IMR-90 (cell line): ENCODE measurements at regions of chr10 and their contacts with region 1.

Region 1: DNA sequence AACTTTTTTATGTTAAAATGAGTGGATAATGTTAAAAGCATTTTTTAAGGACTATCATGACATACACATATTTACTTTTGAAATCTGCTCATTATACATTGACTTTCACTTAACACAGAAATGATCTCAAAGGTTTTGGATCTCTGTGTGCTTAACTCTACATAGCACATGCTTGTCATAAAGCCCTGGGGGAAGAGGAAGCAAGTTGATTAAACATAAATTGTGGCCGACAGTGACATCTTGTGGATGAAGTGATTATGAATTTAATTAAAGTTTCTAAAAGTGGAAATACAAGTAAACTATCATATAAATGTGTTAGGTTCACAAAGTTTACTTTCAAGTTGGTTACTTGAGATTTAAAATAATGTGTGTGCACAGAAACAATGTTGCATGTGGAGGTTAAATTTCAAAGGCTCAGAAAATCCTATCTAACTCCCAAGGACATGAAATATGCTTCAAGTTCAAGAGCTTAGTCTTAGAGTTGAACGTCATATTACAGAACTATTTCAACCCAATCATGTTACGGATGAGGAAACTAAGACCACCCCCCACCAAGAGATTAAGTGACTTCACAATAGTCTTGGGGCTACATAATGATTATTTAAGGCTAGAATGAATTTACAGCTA is 1247.7 kb downstream of the GATA3 start:
- DNase-seq: peak; percentile 53
- ATAC-seq: peak; percentile 62
- H3K4me3 ChIP-seq: no peak overlapping the region
- H3K27ac ChIP-seq: no peak overlapping the region
- H3K4me1 ChIP-seq: no peaks in the 10 kb centered on the region
- H3K27me3 ChIP-seq: no peaks in the 10 kb centered on the region
- CTCF ChIP-seq: peak; percentile 50
- POLR2A ChIP-seq: no peak
- RAD21 ChIP-seq: peak; percentile 54

Region 2: GRCh38 chr10:7525314-7526016 is 1776.8 kb before region 1 on chr10:
- CTCF ChIA-PET with region 1: no interaction called
- POLR2A ChIA-PET with region 1: interaction called, 6 read pairs
- dilution Hi-C with region 1: no loop called
- in situ Hi-C with region 1: loop called (anchors 5 kb)
- intact Hi-C with region 1: loop called (anchors 1 kb)
- DNase-seq: peak; percentile 66
- ATAC-seq: peak; percentile 85
- H3K4me3 ChIP-seq: no peak overlapping the region
- H3K27ac ChIP-seq: no peak overlapping the region
- H3K4me1 ChIP-seq: no peaks in the 10 kb centered on the region
- H3K27me3 ChIP-seq: peaks cover 1% of the 10 kb centered on the region; the same call in 1 of the 2 replicates
- CTCF ChIP-seq: peak; percentile 88
- POLR2A ChIP-seq: no peak
- RAD21 ChIP-seq: peak; percentile 85

Region 3: DNA sequence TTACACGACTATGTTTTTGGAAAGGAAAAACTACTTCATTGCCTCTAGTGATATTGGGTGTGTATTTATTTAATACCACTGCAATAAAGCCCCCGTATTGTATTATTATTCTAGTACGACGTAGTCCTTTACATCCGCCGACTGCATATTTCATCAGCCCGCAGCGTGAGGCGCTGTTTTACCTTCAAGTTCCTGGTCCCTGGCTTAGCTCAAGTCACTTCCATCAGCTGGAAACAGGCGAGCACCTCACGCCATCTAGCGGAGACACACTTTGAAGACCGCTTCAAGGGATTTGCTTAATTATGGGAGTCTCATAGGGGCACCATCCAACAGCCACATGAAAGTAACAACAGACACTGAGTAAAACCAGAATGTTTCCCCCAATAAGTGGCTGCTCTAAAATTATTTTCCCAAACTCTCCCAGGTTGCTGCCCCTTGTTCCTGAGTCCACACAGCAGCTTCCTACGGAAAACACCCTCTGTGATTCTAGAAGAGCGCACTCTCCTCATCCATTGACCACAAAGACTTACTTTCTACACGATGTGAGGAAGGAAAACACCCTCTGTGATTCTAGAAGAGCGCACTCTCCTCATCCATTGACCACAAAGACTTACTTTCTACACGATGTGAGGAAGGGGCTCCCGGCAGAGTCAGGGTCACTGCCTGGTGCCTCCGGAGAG is 1614.9 kb before region 1 on chr10:
- CTCF ChIA-PET with region 1: no interaction called
- POLR2A ChIA-PET with region 1: no interaction called
- dilution Hi-C with region 1: no loop called
- in situ Hi-C with region 1: no loop called
- intact Hi-C with region 1: loop called (anchors 5 kb)
- DNase-seq: peak; percentile 85
- ATAC-seq: peak; percentile 96
- H3K4me3 ChIP-seq: no peak overlapping the region
- H3K27ac ChIP-seq: no peak overlapping the region
- H3K4me1 ChIP-seq: no peaks in the 10 kb centered on the region
- H3K27me3 ChIP-seq: no peaks in the 10 kb centered on the region; the same call in 1 of the 2 replicates
- CTCF ChIP-seq: peak; percentile 85
- POLR2A ChIP-seq: no peak
- RAD21 ChIP-seq: peak; percentile 70

Region 4: DNA sequence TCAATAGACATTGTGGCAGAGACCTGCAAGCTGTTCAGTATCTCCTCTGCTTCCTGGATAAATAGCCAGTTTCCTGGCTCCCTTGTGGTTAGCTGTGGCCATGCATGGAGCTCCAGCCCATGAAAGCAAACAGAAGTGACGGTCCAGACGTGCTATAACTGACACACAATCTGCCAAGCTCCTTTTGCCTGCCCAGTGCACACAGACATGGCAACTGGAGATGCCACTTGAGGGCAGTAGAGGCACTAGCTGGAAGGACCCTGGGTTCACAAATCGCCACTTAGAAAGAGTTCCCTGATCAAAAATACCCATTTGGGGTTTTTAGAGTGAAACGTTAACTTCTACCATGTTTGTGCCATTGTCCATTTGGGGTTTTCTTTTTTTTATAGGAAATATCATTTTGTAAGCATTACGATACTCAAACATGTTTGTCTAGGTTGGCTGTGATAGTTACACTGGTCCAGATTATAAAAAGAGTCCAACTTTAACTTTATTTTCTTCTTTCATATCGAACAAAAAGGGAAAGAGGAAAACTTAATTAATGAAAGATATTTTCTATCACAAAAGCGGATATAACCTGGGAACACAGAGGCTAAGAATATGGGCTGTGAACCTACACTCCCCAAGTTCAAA is 1545.8 kb before region 1 on chr10:
- CTCF ChIA-PET with region 1: no interaction called
- POLR2A ChIA-PET with region 1: no interaction called
- dilution Hi-C with region 1: no loop called
- in situ Hi-C with region 1: no loop called
- intact Hi-C with region 1: loop called (anchors 10 kb)
- DNase-seq: peak; percentile 8
- ATAC-seq: peak; percentile 56; the same call in 1 of the 2 replicates
- H3K4me3 ChIP-seq: no peak overlapping the region
- H3K27ac ChIP-seq: no peak overlapping the region
- H3K4me1 ChIP-seq: no peaks in the 10 kb centered on the region
- H3K27me3 ChIP-seq: no peaks in the 10 kb centered on the region
- CTCF ChIP-seq: peak; percentile 36; the same call in 1 of the 2 replicates
- POLR2A ChIP-seq: no peak
- RAD21 ChIP-seq: peak; percentile 37; the same call in 1 of the 2 replicates

Region 5: GRCh38 chr10:7866176-7866575 is 1436.1 kb before region 1 on chr10:
- CTCF ChIA-PET with region 1: no interaction called
- POLR2A ChIA-PET with region 1: no interaction called
- dilution Hi-C with region 1: no loop called
- in situ Hi-C with region 1: loop called (anchors 5 kb)
- intact Hi-C with region 1: no loop called
- DNase-seq: peak; percentile 35
- ATAC-seq: no peak
- H3K4me3 ChIP-seq: no peak overlapping the region
- H3K27ac ChIP-seq: no peak overlapping the region
- H3K4me1 ChIP-seq: no peaks in the 10 kb centered on the region
- H3K27me3 ChIP-seq: no peaks in the 10 kb centered on the region
- CTCF ChIP-seq: no peak
- POLR2A ChIP-seq: no peak
- RAD21 ChIP-seq: no peak

Region 6: DNA sequence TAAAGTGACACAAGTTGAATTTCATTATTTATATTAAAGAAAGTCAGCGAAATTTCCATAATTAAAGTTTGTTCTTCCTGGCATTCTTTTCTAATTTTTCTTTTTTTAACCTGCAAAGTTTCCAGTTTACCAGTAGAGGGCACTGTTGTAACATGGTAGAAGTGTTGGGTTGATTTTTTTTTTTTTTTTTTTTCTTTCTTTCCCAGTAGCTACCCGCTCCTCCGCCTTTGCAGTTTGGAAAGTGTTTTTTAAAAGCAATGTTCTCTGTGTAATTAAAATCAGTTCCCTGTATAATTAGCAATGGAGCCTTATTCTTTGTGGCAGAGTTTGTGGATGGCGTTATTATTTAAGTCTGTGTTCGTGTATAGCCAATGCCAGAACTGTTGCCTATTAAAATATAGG is 1430.2 kb before region 1 on chr10:
- CTCF ChIA-PET with region 1: no interaction called
- POLR2A ChIA-PET with region 1: no interaction called
- dilution Hi-C with region 1: no loop called
- in situ Hi-C with region 1: loop called (anchors 5 kb)
- intact Hi-C with region 1: loop called (anchors 2 kb)
- DNase-seq: peak; percentile 11
- ATAC-seq: no peak
- H3K4me3 ChIP-seq: 0 out of 2 replicates have a peak overlapping the region, but pooled peaks have one; percentile 34
- H3K27ac ChIP-seq: no peak overlapping the region
- H3K4me1 ChIP-seq: no peaks in the 10 kb centered on the region
- H3K27me3 ChIP-seq: no peaks in the 10 kb centered on the region
- CTCF ChIP-seq: peak; percentile 86
- POLR2A ChIP-seq: no peak
- RAD21 ChIP-seq: peak; percentile 85

Region 7: DNA sequence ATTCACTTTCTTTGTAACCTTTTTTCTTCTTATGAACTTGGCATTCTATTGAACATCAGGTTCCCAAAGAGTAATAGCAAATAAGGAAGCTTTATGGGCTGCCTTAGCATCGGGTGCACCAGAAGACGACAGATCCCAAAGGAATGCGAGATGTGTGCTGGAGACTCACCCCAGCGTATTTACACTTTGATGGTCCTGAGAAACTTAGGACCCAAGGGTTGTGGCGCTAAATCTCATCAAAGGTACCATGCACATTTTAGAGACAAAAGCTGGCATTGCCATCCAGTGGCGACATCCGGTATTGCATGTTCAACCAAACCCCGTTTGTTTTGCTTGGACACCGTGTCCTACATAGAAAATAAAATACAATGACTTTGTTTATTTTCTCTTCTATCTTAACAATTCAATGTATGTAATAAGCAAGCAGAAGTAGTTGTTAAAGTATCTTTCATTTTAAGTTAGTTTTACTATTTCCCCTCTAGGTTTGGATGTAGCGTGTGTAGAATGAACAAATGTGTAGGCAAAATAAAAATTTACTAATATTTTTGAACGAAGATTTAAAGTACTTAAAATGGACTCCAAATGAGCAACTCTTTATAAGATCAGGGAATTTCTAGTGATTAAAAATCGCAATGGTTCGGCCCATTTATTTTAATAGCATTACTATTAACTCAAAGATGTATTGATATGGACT is 93.0 kb before region 1 on chr10:
- CTCF ChIA-PET with region 1: no interaction called
- POLR2A ChIA-PET with region 1: no interaction called
- dilution Hi-C with region 1: no loop called
- in situ Hi-C with region 1: no loop called
- intact Hi-C with region 1: loop called (anchors 5 kb)
- DNase-seq: peak; percentile 60
- ATAC-seq: peak; percentile 84
- H3K4me3 ChIP-seq: no peak overlapping the region
- H3K27ac ChIP-seq: no peak overlapping the region
- H3K4me1 ChIP-seq: no peaks in the 10 kb centered on the region
- H3K27me3 ChIP-seq: no peaks in the 10 kb centered on the region
- CTCF ChIP-seq: peak; percentile 84
- POLR2A ChIP-seq: no peak
- RAD21 ChIP-seq: peak; percentile 82

Region 8: DNA sequence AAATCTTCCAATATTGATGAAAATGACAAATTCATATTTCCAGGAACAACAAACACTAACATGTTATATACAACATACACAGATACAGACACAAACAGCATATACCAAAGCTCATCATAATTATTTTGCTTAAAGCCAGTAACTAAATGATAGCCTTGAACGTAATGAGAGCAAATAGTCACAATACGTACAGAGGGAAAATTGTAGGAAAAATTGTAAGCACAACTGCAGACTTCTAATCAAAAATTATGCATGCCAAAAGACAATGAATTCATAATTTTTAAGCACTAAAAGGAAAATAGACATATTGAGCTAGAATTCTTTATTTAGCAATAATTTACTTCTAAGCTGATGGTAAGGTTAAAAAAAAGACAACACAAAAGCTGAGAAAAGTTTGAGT is 248.6 kb after region 1 on chr10:
- CTCF ChIA-PET with region 1: no interaction called
- POLR2A ChIA-PET with region 1: no interaction called
- dilution Hi-C with region 1: no loop called
- in situ Hi-C with region 1: no loop called
- intact Hi-C with region 1: no loop called
- DNase-seq: no peak
- ATAC-seq: no peak
- H3K4me3 ChIP-seq: no peak overlapping the region
- H3K27ac ChIP-seq: no peak overlapping the region
- H3K4me1 ChIP-seq: no peaks in the 10 kb centered on the region
- H3K27me3 ChIP-seq: no peaks in the 10 kb centered on the region
- CTCF ChIP-seq: no peak
- POLR2A ChIP-seq: no peak
- RAD21 ChIP-seq: no peak